Activated CD4-positive, alpha-beta T cell treated with anti-CD3 and anti-CD28 coated beads, Interleukin-2, amount 10 ng/mL, durations not matched to agents 24 days and 14 days (primary cell): ENCODE measurements at regions of chrX and their contacts with region 1.

Region 1: GRCh38 chrX:20515841-20516461 is 249.2 kb upstream of the RPS6KA3 start:
- DNase-seq: peak; percentile 69
- H3K4me3 Mint-ChIP-seq: peak overlapping the region; percentile 45
- H3K27ac Mint-ChIP-seq: peak overlapping the region; percentile 91
- H3K4me1 Mint-ChIP-seq: peaks cover 40% of the 10 kb centered on the region
- H3K27me3 Mint-ChIP-seq: peaks cover 9% of the 10 kb centered on the region

Region 2: GRCh38 chrX:20224814-20225487 is 291.0 kb before region 1 on chrX:
- intact Hi-C with region 1: loop called (anchors 2 kb)
- DNase-seq: no peak
- H3K4me3 Mint-ChIP-seq: no peak overlapping the region
- H3K27ac Mint-ChIP-seq: peak overlapping the region; percentile 68
- H3K4me1 Mint-ChIP-seq: peaks cover 11% of the 10 kb centered on the region
- H3K27me3 Mint-ChIP-seq: no peaks in the 10 kb centered on the region

Region 3: GRCh38 chrX:20382518-20383297 is 133.2 kb before region 1 on chrX:
- intact Hi-C with region 1: loop called (anchors 5 kb)
- DNase-seq: peak; percentile 58
- H3K4me3 Mint-ChIP-seq: peak overlapping the region; percentile 5
- H3K27ac Mint-ChIP-seq: peak overlapping the region; percentile 70
- H3K4me1 Mint-ChIP-seq: peaks cover 16% of the 10 kb centered on the region
- H3K27me3 Mint-ChIP-seq: peaks cover 2% of the 10 kb centered on the region

Region 4: GRCh38 chrX:20500171-20500865 is 15.6 kb before region 1 on chrX:
- intact Hi-C with region 1: loop called (anchors 2 kb)
- DNase-seq: peak; percentile 73
- H3K4me3 Mint-ChIP-seq: peak overlapping the region; percentile 48
- H3K27ac Mint-ChIP-seq: no peak overlapping the region
- H3K4me1 Mint-ChIP-seq: peaks cover 15% of the 10 kb centered on the region
- H3K27me3 Mint-ChIP-seq: peaks cover 43% of the 10 kb centered on the region

Region 5: GRCh38 chrX:21374163-21374993 is 858.4 kb after region 1 on chrX and contains the start of gene CNKSR2:
- intact Hi-C with region 1: loop called (anchors 10 kb)
- DNase-seq: peak; percentile 90
- H3K4me3 Mint-ChIP-seq: peak within 1 kb of the TSS; percentile 94
- H3K27ac Mint-ChIP-seq: peak within 1 kb of the TSS; percentile 83
- H3K4me1 Mint-ChIP-seq: peaks cover 13% of the 10 kb centered on the region
- H3K27me3 Mint-ChIP-seq: peaks cover 5% of the 10 kb centered on the region
- total RNA-seq, gene CNKSR2: 7.1 and 10.2 TPM in 2 replicates